B cell (primary cell): ENCODE measurements at regions of chr1 and their contacts with region 1.

Region 1: GRCh38 chr1:66360285-66360724 is 173.6 kb upstream of the SGIP1 start:
- DNase-seq: peak; percentile 38
- ATAC-seq: peak; percentile 61
- H3K4me3 ChIP-seq: no peak overlapping the region
- H3K4me3 Mint-ChIP-seq: peak overlapping the region; percentile 78
- H3K27ac ChIP-seq: peak overlapping the region in 1 of 2 donors; percentile 78
- H3K27ac Mint-ChIP-seq: peak overlapping the region; percentile 82
- H3K4me1 ChIP-seq: peaks cover 34 to 35% of the 10 kb centered on the region in 2 donors
- H3K4me1 Mint-ChIP-seq: peaks cover 84% of the 10 kb centered on the region
- H3K27me3 ChIP-seq: no peaks in the 10 kb centered on the region
- H3K27me3 Mint-ChIP-seq: no peaks in the 10 kb centered on the region
- CTCF ChIP-seq: peak; percentile 56

Region 2: DNA sequence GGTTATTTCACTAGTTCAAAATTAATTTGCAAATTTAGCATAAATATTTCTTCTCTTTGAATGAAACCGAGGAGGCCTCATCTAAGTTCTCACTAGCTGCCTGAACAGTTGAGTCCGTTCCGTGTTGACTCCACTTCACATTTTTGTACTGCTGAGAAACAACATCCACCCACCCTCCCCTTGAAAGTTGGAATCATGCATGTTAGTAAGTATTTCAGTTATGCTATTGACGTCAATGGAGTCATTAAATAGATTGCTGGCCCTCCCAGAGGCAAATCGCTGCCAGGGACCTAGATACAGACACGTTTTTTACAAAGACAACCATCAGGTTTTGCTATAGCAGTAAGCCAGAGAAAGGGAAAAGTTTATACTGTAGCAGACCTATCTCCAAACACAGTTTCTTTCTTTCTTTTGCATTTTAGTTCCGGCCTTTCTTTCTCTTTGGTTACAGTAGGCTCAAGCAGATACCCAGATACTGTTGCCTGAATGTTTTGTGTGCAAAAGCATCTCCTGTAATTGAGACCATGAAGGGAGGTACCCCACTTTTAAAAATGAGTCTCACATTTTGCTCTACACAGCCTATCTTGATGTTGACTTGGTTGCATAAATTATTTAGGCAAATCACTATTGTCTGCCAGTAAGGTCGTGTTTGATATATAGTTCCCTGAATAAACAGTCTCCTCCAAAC is 88.9 kb before region 1 on chr1:
- CTCF ChIA-PET with region 1: no interaction called
- POLR2A ChIA-PET with region 1: no interaction called
- intact Hi-C with region 1: no loop called
- DNase-seq: peak; percentile 48
- ATAC-seq: peak; percentile 90
- H3K4me3 ChIP-seq: no peak overlapping the region
- H3K4me3 Mint-ChIP-seq: peak overlapping the region; percentile 81
- H3K27ac ChIP-seq: no peak overlapping the region
- H3K27ac Mint-ChIP-seq: peak overlapping the region; percentile 93
- H3K4me1 ChIP-seq: peaks cover 14 to 21% of the 10 kb centered on the region in 2 donors
- H3K4me1 Mint-ChIP-seq: peaks cover 36% of the 10 kb centered on the region
- H3K27me3 ChIP-seq: no peaks in the 10 kb centered on the region
- H3K27me3 Mint-ChIP-seq: no peaks in the 10 kb centered on the region
- CTCF ChIP-seq: no peak

Region 3: DNA sequence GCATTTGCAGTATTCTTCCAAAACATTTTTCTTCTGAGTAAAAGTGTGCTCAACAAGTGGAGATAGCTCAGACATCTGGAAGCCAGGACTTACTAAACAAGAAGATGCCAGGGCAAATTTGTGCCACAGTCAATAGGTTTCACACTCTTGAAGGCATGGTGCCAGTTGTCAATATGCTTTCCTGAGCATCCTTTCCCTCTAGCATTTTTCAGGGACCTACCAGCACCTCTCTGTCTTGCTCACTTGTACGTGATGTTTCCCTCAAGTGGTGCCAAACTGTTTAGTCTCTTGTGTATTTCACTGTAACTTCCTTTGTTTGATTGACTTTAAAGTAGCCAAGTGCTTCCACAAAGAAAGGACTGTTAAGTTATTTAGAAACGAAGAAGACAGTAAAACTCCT is 20.4 kb before region 1 on chr1:
- CTCF ChIA-PET with region 1: interaction called, 10 read pairs
- POLR2A ChIA-PET with region 1: interaction called, 5 read pairs
- intact Hi-C with region 1: no loop called
- DNase-seq: peak; percentile 50
- ATAC-seq: no peak
- H3K4me3 ChIP-seq: peak overlapping the region in 3 of 5 experiments; percentile 22 to 27 (median 27)
- H3K4me3 Mint-ChIP-seq: peak overlapping the region; percentile 82
- H3K27ac ChIP-seq: peak overlapping the region; percentile 53 to 94
- H3K27ac Mint-ChIP-seq: peak overlapping the region; percentile 67
- H3K4me1 ChIP-seq: peaks cover 77 to 78% of the 10 kb centered on the region in 2 donors
- H3K4me1 Mint-ChIP-seq: peaks cover 77% of the 10 kb centered on the region
- H3K27me3 ChIP-seq: no peaks in the 10 kb centered on the region
- H3K27me3 Mint-ChIP-seq: no peaks in the 10 kb centered on the region
- CTCF ChIP-seq: no peak

Region 4: DNA sequence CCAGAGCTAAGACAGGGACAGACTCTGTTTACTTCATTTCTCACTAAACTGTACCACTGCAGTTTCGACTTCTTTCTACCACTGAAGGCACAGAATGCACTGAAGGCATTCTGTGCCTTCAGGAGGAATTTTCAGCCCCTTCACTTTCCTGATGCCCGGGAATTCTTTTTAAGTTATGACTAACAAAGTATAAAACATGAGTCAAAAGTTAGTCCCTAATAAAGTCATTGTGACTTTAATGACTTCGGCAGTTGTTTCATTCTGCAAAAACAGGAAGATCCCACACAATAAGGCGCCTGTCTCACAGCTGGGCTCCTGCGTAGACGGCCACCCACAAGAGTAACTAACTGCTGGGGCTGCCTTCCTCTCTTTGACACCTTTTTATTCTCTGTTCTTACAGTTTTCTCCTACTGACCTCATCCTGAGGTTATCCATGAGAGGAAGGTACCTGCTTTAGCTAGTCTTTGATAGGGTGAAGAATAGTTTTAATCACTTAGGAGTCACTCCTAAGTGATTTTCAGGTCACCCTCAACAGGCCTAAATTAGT is 10.2 kb before region 1 on chr1:
- CTCF ChIA-PET with region 1: interaction called, 14 read pairs
- POLR2A ChIA-PET with region 1: no interaction called
- intact Hi-C with region 1: loop called (anchors 1 kb)
- DNase-seq: peak; percentile 82
- ATAC-seq: peak; percentile 78
- H3K4me3 ChIP-seq: peak overlapping the region in 2 of 5 experiments; percentile 4 to 31
- H3K4me3 Mint-ChIP-seq: peak overlapping the region; percentile 88
- H3K27ac ChIP-seq: peak overlapping the region; percentile 74 to 87
- H3K27ac Mint-ChIP-seq: peak overlapping the region; percentile 84
- H3K4me1 ChIP-seq: peaks cover 74 to 94% of the 10 kb centered on the region in 2 donors
- H3K4me1 Mint-ChIP-seq: peaks cover 95% of the 10 kb centered on the region
- H3K27me3 ChIP-seq: no peaks in the 10 kb centered on the region
- H3K27me3 Mint-ChIP-seq: no peaks in the 10 kb centered on the region
- CTCF ChIP-seq: no peak

Region 5: GRCh38 chr1:66374561-66375111 is 14.3 kb after region 1 on chr1:
- CTCF ChIA-PET with region 1: interaction called, 18 read pairs
- POLR2A ChIA-PET with region 1: no interaction called
- intact Hi-C with region 1: no loop called
- DNase-seq: peak; percentile 90
- ATAC-seq: peak; percentile 73
- H3K4me3 ChIP-seq: peak overlapping the region in 1 of 5 experiments; percentile 13
- H3K4me3 Mint-ChIP-seq: peak overlapping the region; percentile 69
- H3K27ac ChIP-seq: peak overlapping the region; percentile 83 to 90
- H3K27ac Mint-ChIP-seq: peak overlapping the region; percentile 81
- H3K4me1 ChIP-seq: peaks cover 82 to 89% of the 10 kb centered on the region in 2 donors
- H3K4me1 Mint-ChIP-seq: peaks cover 86% of the 10 kb centered on the region
- H3K27me3 ChIP-seq: no peaks in the 10 kb centered on the region
- H3K27me3 Mint-ChIP-seq: no peaks in the 10 kb centered on the region
- CTCF ChIP-seq: no peak